ENCODE measurements at regions of chr18 and their contacts with region 1.

Region 1: DNA sequence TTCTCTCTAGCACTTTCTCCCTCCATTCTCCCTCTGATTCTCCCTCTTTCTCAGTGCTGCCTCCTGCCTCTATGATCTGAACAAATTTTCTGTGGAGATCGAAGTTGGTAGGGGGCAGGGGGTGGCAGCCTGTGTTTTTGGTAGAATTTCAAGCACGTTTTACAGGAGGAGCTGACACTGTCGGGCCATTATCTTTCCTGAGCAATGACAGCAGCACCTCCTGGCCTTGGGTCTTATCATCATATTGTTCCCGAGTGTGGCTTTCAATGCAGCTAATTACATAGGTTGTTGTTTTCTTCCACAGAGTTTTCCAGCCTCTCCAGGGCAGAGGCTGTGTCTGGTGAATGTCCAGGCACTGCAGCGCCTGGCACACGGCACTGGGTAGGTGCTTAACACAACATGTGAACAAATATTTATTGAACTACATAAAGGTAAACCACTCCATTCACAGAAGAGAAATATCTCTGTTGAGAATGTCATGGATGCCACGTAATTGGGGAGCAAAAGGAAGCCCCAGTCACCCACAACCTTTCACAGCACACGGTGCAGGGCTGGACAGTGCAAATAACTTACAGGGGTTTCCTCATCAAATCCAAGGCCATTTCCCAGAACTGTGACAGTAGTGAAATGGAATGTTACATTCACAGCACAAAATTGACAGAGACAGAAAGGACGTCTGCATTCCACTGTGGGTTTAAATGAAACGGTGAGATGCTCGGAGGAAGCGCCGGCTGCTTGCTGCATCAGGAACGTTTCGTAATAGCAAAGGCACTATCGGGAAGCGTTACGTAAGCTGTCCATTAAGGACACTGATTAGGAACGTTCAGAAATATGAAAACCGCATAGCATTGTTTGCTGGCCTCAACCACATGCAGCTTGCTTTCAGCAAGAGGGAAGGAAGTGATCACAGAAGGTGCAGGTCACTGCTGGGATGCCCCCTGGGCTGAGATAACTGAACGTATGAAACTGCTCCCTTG is 6.5 kb upstream of the KCNG2 start:
- DNase-seq: peak; percentile 34
- H3K4me3 ChIP-seq: no peak overlapping the region
- H3K27ac ChIP-seq: no peak overlapping the region
- H3K4me1 ChIP-seq: no peaks in the 10 kb centered on the region
- H3K27me3 ChIP-seq: peaks cover 49% of the 10 kb centered on the region
- CTCF ChIP-seq: no peak

Region 2: GRCh38 chr18:79246348-79247108 is 544.8 kb before region 1 on chr18:
- CTCF ChIA-PET with region 1: no interaction called
- POLR2A ChIA-PET with region 1: no interaction called
- intact Hi-C with region 1: no loop called
- DNase-seq: peak; percentile 84
- H3K4me3 ChIP-seq: no peak overlapping the region
- H3K27ac ChIP-seq: no peak overlapping the region
- H3K4me1 ChIP-seq: peaks cover 21% of the 10 kb centered on the region
- H3K27me3 ChIP-seq: peaks cover 30% of the 10 kb centered on the region
- CTCF ChIP-seq: peak; percentile 99

Region 3: GRCh38 chr18:79951578-79952455 is 160.5 kb after region 1 on chr18 and contains the start of gene SLC66A2:
- CTCF ChIA-PET with region 1: interaction called, 3 read pairs
- POLR2A ChIA-PET with region 1: no interaction called
- intact Hi-C with region 1: loop called (anchors 10 kb)
- DNase-seq: peak; percentile 88
- H3K4me3 ChIP-seq: peak within 1 kb of the TSS; percentile 93
- H3K27ac ChIP-seq: peak within 1 kb of the TSS; percentile 80
- H3K4me1 ChIP-seq: peaks cover 10% of the 10 kb centered on the region
- H3K27me3 ChIP-seq: no peaks in the 10 kb centered on the region
- CTCF ChIP-seq: no peak
- total RNA-seq, gene SLC66A2: 28.0 and 34.9 TPM in 2 replicates

Region 4: GRCh38 chr18:80157708-80158343 is 366.5 kb after region 1 on chr18:
- CTCF ChIA-PET with region 1: no interaction called
- POLR2A ChIA-PET with region 1: no interaction called
- intact Hi-C with region 1: loop called (anchors 10 kb)
- DNase-seq: peak; percentile 75
- H3K4me3 ChIP-seq: no peak overlapping the region
- H3K27ac ChIP-seq: no peak overlapping the region
- H3K4me1 ChIP-seq: peaks cover 6% of the 10 kb centered on the region
- H3K27me3 ChIP-seq: no peaks in the 10 kb centered on the region
- CTCF ChIP-seq: peak; percentile 95